ENCODE measurements at regions of chr1 and their contacts with region 1.

Region 1: DNA sequence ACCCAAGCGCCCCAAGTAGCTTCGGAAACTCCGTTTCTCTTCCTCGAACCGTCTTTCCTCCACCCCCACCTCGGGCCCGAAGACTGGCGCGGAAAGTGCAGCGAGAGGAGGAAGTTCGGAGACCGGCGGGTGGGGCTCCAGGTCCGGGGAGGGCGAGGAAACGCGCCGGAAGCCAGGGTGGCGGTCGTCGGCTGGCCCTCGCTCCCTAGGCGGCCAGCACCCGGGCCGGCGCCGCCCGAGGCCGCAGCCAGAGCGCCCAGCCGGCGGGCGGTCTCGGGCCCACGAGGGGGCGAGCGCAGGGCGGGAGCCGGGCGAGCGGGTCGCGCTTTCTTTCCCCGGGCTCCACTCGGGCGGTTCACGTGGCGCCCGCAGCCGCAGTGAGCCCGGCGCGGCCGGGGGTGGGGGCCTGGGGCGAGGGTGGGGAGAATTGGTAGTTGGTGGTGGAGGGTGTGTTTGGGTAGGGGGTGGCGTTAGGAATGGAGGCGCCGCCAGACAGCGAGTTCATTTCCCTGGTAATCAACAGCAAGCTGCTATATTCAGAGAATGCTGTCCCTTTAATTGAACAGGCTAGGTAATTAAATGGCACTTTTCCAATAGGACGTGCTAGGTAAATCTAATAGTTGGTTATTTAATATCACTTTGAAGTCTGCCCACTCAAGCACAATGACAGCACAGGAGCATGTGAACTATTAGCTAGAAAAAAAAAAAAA is 6.7 kb downstream of the LMO4 start:
- DNase-seq: peak; percentile 77
- H3K4me3 ChIP-seq: peak overlapping the region; percentile 67
- H3K27ac ChIP-seq: no peak overlapping the region
- H3K4me1 ChIP-seq: peaks cover 32% of the 10 kb centered on the region
- CTCF ChIP-seq: 0 out of 2 replicates have a peak, but pooled peaks have one; percentile 19

Region 2: GRCh38 chr1:87346122-87346814 is 10.9 kb after region 1 on chr1:
- CTCF ChIA-PET with region 1: no interaction called
- POLR2A ChIA-PET with region 1: interaction called, 15 read pairs
- intact Hi-C with region 1: no loop called
- DNase-seq: no peak
- H3K4me3 ChIP-seq: no peak overlapping the region
- H3K27ac ChIP-seq: no peak overlapping the region
- H3K4me1 ChIP-seq: no peaks in the 10 kb centered on the region
- CTCF ChIP-seq: no peak

Region 3: GRCh38 chr1:88891318-88891950 is 1556.1 kb after region 1 on chr1 and contains the start of gene GTF2B:
- CTCF ChIA-PET with region 1: no interaction called
- POLR2A ChIA-PET with region 1: no interaction called
- intact Hi-C with region 1: loop called (anchors 10 kb)
- DNase-seq: peak; percentile 96
- H3K4me3 ChIP-seq: peak within 1 kb of the TSS; percentile 96
- H3K27ac ChIP-seq: peak within 1 kb of the TSS; percentile 63
- H3K4me1 ChIP-seq: peaks cover 26% of the 10 kb centered on the region
- CTCF ChIP-seq: no peak
- total RNA-seq, gene GTF2B: 40.3 and 41.1 TPM in 2 replicates

Measured in OCI-LY7 (cell line).